Activated B cell treated with CpG ODN at 0.5 μM for 24 hours (primary cell): ENCODE measurements at regions of chr3 and their contacts with region 1.

Region 1: GRCh38 chr3:31918179-31919168 is 62.6 kb downstream of the OSBPL10 start:
- DNase-seq: no peak
- ATAC-seq: peak; percentile 53
- H3K4me3 Mint-ChIP-seq: peak overlapping the region; percentile 58
- H3K27ac Mint-ChIP-seq: peak overlapping the region; percentile 91
- H3K4me1 Mint-ChIP-seq: peaks cover 78% of the 10 kb centered on the region
- H3K27me3 Mint-ChIP-seq: no peaks in the 10 kb centered on the region
- CTCF ChIP-seq: no peak

Region 2: GRCh38 chr3:31575448-31575847 is 343.0 kb before region 1 on chr3:
- CTCF ChIA-PET with region 1: no interaction called
- POLR2A ChIA-PET with region 1: no interaction called
- intact Hi-C with region 1: no loop called
- DNase-seq: no peak
- ATAC-seq: no peak
- H3K4me3 Mint-ChIP-seq: no peak overlapping the region
- H3K27ac Mint-ChIP-seq: peak overlapping the region; percentile 27
- H3K4me1 Mint-ChIP-seq: peaks cover 44% of the 10 kb centered on the region
- H3K27me3 Mint-ChIP-seq: no peaks in the 10 kb centered on the region
- CTCF ChIP-seq: no peak

Region 3: DNA sequence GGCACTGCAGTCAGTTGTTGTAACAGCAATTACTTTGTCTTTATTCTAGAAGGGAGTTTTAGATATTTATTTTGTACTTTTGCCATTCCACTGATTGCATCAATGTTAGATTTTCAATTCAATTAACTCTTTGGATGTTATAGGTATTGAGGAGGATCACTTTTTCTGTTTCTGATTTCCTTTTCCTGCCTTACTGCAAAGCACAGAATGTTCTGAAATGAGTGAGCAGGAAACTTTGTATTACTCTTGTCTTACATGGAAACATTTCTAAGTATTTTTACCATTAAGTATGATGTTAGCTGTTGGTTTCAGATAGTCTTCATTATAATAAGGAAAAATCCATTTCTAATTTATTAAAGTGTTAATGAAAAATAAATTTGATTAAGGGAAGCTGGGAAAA is 17.9 kb before region 1 on chr3:
- CTCF ChIA-PET with region 1: no interaction called
- POLR2A ChIA-PET with region 1: interaction called, 7 read pairs
- intact Hi-C with region 1: loop called (anchors 2 kb)
- DNase-seq: no peak
- ATAC-seq: no peak
- H3K4me3 Mint-ChIP-seq: no peak overlapping the region
- H3K27ac Mint-ChIP-seq: peak overlapping the region; percentile 75
- H3K4me1 Mint-ChIP-seq: peaks cover 72% of the 10 kb centered on the region
- H3K27me3 Mint-ChIP-seq: no peaks in the 10 kb centered on the region
- CTCF ChIP-seq: no peak

Region 4: GRCh38 chr3:31952205-31952604 is 33.7 kb after region 1 on chr3:
- CTCF ChIA-PET with region 1: no interaction called
- POLR2A ChIA-PET with region 1: interaction called, 6 read pairs
- intact Hi-C with region 1: loop called (anchors 2 kb)
- DNase-seq: peak; percentile 61
- ATAC-seq: peak; percentile 82
- H3K4me3 Mint-ChIP-seq: peak overlapping the region; percentile 75
- H3K27ac Mint-ChIP-seq: peak overlapping the region; percentile 96
- H3K4me1 Mint-ChIP-seq: peaks cover 91% of the 10 kb centered on the region
- H3K27me3 Mint-ChIP-seq: no peaks in the 10 kb centered on the region
- CTCF ChIP-seq: no peak

Region 5: DNA sequence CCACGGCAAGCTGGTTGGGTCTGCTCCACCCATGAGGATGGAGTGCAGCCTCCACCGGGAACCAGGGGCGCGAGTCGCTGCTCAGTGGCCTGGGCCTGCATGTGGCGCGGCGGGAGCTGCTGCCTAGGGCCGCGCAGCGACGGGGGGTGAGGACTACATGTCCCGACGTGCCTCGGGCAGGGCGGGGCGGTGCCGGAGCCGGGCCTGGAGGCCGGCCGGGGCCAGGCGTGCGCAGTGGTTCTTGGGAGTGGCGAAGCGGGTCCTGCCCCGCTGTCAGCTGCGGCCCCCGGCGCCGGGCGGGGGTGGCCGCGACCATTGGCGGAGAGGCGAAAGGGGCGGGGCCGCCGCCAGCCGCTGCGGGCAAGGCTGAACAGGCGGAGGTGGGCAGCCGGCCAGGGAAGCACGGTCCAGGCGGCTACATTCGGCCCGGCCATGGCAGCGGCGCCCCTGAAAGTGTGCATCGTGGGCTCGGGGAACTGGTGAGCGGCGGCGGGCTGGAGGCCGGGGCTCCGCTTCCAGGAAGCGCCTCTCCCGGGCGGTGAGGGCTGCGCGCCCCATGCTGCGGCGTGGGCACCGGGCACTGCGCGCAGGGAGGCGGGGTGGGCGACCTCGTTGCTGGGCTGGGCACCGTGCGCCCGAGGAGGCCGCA is 187.9 kb after region 1 on chr3 and contains the start of gene GPD1L:
- CTCF ChIA-PET with region 1: no interaction called
- POLR2A ChIA-PET with region 1: no interaction called
- intact Hi-C with region 1: loop called (anchors 1 kb)
- DNase-seq: peak; percentile 93
- ATAC-seq: peak; percentile 99
- H3K4me3 Mint-ChIP-seq: peak within 1 kb of the TSS; percentile 96
- H3K27ac Mint-ChIP-seq: peak within 1 kb of the TSS; percentile 87
- H3K4me1 Mint-ChIP-seq: peaks cover 18% of the 10 kb centered on the region
- H3K27me3 Mint-ChIP-seq: no peaks in the 10 kb centered on the region
- CTCF ChIP-seq: no peak
- total RNA-seq, gene GPD1L: 8.2 and 9.6 TPM in 2 replicates

Region 6: DNA sequence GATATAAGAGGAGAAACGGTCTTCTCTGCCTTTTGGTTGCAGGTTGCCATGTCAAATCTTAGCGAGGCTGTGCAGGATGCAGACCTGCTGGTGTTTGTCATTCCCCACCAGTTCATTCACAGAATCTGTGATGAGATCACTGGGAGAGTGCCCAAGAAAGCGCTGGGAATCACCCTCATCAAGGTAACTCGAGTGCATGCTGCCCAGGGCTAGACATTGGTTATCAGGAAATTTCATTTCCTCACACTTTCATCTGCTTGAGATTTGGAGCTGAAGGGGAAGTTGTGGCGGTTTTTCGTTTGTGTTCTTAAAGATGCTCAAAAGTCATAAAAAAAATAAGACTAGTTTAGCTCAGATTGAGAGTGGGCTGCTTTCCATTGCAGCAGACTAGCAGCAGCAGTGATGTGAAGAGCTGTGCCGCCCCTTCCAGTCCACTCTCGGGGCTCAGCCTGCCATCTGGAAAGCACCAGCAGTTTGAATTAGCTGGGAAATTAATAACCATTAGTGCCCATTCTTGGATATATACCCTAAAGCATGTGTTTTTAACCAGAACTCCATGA is 220.2 kb after region 1 on chr3:
- CTCF ChIA-PET with region 1: no interaction called
- POLR2A ChIA-PET with region 1: no interaction called
- intact Hi-C with region 1: no loop called
- DNase-seq: no peak
- ATAC-seq: peak; percentile 34
- H3K4me3 Mint-ChIP-seq: no peak overlapping the region
- H3K27ac Mint-ChIP-seq: peak overlapping the region; percentile 30
- H3K4me1 Mint-ChIP-seq: peaks cover 20% of the 10 kb centered on the region
- H3K27me3 Mint-ChIP-seq: no peaks in the 10 kb centered on the region
- CTCF ChIP-seq: no peak